ENCODE measurements at regions of chr9 and their contacts with region 1.

Region 1: GRCh38 chr9:37229882-37230487 is 109.6 kb downstream of the ZCCHC7 start:
- DNase-seq: no peak
- ATAC-seq: no peak
- H3K4me3 ChIP-seq: no peak overlapping the region
- H3K4me3 Mint-ChIP-seq: no peak overlapping the region
- H3K27ac ChIP-seq: no peak overlapping the region
- H3K27ac Mint-ChIP-seq: no peak overlapping the region
- H3K4me1 ChIP-seq: no peaks in the 10 kb centered on the region
- H3K4me1 Mint-ChIP-seq: peaks cover 7 to 34% (median 21%) of the 10 kb centered on the region in 7 donors
- H3K27me3 ChIP-seq: no peaks in the 10 kb centered on the region
- H3K27me3 Mint-ChIP-seq: no peaks in the 10 kb centered on the region

Region 2: GRCh38 chr9:37243588-37244345 is 13.8 kb after region 1 on chr9:
- CTCF ChIA-PET with region 1: no interaction called
- POLR2A ChIA-PET with region 1: no interaction called
- intact Hi-C with region 1: loop called in 1 of 2 experiments (anchors 2 kb)
- DNase-seq: no peak
- ATAC-seq: no peak
- H3K4me3 ChIP-seq: no peak overlapping the region
- H3K4me3 Mint-ChIP-seq: no peak overlapping the region
- H3K27ac ChIP-seq: no peak overlapping the region
- H3K27ac Mint-ChIP-seq: no peak overlapping the region
- H3K4me1 ChIP-seq: no peaks in the 10 kb centered on the region
- H3K4me1 Mint-ChIP-seq: peaks cover 2 to 28% (median 11%) of the 10 kb centered on the region in 7 donors
- H3K27me3 ChIP-seq: no peaks in the 10 kb centered on the region
- H3K27me3 Mint-ChIP-seq: no peaks in the 10 kb centered on the region